ENCODE measurements at regions of chr7 and their contacts with region 1.

Region 1: GRCh38 chr7:50793115-50793946 is 10.6 kb upstream of the GRB10 start:
- DNase-seq: peak; percentile 82 to 87 (median 84)
- ATAC-seq: peak; percentile 44 to 88 (median 76)
- H3K4me3 ChIP-seq: peak overlapping the region in 11 of 12 donors; percentile 36 to 94 (median 70)
- H3K27ac ChIP-seq: peak overlapping the region; percentile 64 to 94 (median 85)
- H3K4me1 ChIP-seq: peaks cover 3 to 46% (median 27%) of the 10 kb centered on the region in 12 donors
- H3K27me3 ChIP-seq: no peaks in the 10 kb centered on the region
- CTCF ChIP-seq: peak in 1 of 12 donors; percentile 1
- POLR2A ChIP-seq: peak in 1 of 2 donors; percentile 20

Region 2: GRCh38 chr7:50620433-50620832 is 172.9 kb before region 1 on chr7:
- intact Hi-C with region 1: loop called in 1 of 10 experiments (anchors 5 kb)
- DNase-seq: no peak
- ATAC-seq: no peak
- H3K4me3 ChIP-seq: no peak overlapping the region
- H3K27ac ChIP-seq: peak overlapping the region in 3 of 12 donors; percentile 22 to 69 (median 33)
- H3K4me1 ChIP-seq: peaks cover 0 to 36% (median 19%) of the 10 kb centered on the region in 12 donors
- H3K27me3 ChIP-seq: no peaks in the 10 kb centered on the region
- CTCF ChIP-seq: no peak
- POLR2A ChIP-seq: no peak

Region 3: DNA sequence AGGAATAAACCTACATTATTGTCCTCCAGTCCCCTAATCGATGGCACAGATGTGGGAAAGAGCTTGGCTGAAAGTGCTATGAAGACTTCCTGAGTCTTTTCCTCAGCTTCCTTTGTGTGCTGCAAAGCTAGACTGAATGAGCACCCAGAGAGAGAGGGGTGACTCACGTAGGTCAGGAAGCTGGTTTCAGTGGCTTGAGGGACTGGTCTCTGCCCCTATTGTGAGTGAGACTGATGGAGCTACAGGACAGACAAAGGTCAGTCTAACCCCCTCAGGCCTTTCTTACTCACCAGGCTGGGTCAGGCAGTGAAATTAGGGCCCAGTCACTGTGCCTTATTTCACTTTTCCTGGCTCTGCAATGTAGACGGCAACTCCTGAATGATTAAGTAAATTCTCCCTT is 160.5 kb after region 1 on chr7:
- intact Hi-C with region 1: loop called in 1 of 10 experiments (anchors 5 kb)
- DNase-seq: peak in 2 of 5 donors; percentile 39 to 67
- ATAC-seq: peak; percentile 28 to 96 (median 88)
- H3K4me3 ChIP-seq: no peak overlapping the region
- H3K27ac ChIP-seq: peak overlapping the region in 10 of 12 donors; percentile 2 to 64 (median 34)
- H3K4me1 ChIP-seq: peaks cover 0 to 37% (median 18%) of the 10 kb centered on the region in 12 donors
- H3K27me3 ChIP-seq: no peaks in the 10 kb centered on the region
- CTCF ChIP-seq: no peak
- POLR2A ChIP-seq: no peak

Region 4: GRCh38 chr7:50962962-50963374 is 169.6 kb after region 1 on chr7:
- intact Hi-C with region 1: loop called in 2 of 10 experiments (anchors 2 to 5 kb)
- DNase-seq: peak; percentile 85 to 89 (median 86)
- ATAC-seq: peak; percentile 89 to 98 (median 94)
- H3K4me3 ChIP-seq: no peak overlapping the region
- H3K27ac ChIP-seq: peak overlapping the region in 1 of 12 donors; percentile 1
- H3K4me1 ChIP-seq: peaks cover 3 to 19% (median 9%) of the 10 kb centered on the region in 12 donors
- H3K27me3 ChIP-seq: no peaks in the 10 kb centered on the region
- CTCF ChIP-seq: no peak
- POLR2A ChIP-seq: no peak

Region 5: DNA sequence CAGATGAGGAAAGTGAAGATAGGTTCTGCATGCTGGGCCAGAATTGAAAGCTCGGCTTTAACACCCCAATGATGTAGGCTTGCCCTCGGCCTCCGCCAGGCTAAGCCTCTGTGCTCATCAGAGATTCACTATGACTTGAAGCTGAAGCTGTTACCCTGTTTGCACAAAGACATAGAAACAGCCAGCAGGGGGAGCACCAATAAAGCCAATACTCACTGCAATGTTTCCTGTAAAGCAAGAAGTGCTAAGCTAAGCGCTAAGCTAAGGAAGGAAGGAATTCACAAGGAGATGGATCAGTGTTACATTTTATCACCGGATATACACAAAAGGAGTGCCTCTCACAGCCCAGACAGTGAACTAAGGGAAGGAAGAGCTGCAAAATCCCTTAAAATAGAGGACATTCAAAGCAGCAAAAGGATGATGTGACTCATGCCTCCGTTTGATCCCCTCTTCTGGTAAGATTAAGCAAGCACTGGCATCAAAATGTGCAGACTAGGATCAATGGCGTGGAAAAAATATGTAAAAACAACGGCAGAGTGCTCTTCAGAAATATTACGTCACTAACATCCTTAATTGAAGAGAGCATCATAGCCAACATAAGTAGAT is 369.5 kb after region 1 on chr7:
- intact Hi-C with region 1: no loop called
- DNase-seq: peak in 4 of 5 donors; percentile 61 to 74 (median 68)
- ATAC-seq: peak; percentile 68 to 90 (median 86)
- H3K4me3 ChIP-seq: no peak overlapping the region
- H3K27ac ChIP-seq: no peak overlapping the region
- H3K4me1 ChIP-seq: peaks cover 0 to 17% (median 2%) of the 10 kb centered on the region in 12 donors
- H3K27me3 ChIP-seq: peaks cover 0 to 7% (median 0%) of the 10 kb centered on the region in 9 donors
- CTCF ChIP-seq: peak; percentile 72 to 88 (median 78)
- POLR2A ChIP-seq: no peak

Measured in heart left ventricle (tissue), 16 donors.